Activated naive CD4-positive, alpha-beta T cell treated with anti-CD3 and anti-CD28 coated beads for 36 hours (primary cell): ENCODE measurements at regions of chr14 and their contacts with region 1.

Region 1: GRCh38 chr14:97866663-97867062 is 1069.5 kb downstream of the VRK1 start:
- DNase-seq: peak; percentile 25
- H3K4me3 Mint-ChIP-seq: no peak overlapping the region
- H3K27ac Mint-ChIP-seq: peak overlapping the region; percentile 61
- H3K4me1 Mint-ChIP-seq: peaks cover 15% of the 10 kb centered on the region
- H3K27me3 Mint-ChIP-seq: no peaks in the 10 kb centered on the region

Region 2: DNA sequence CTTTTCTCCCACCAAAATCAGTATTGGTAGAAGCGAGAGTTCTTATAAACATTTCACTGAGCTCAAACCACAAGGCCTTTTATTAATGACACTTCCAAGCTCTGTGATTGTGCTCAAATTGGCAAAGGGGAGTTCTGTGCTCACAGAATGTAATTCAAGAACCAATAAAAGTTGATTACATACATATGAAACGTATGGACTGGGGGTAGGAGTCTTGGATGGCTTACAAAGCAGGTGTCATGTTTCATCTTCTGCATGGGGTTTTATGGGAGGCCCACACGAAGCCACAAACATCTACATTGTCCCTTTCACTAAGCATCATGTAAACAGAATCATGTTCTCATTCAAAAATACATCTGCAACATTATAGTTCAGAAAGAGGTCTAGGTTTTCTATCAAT is 241.2 kb before region 1 on chr14:
- CTCF ChIA-PET with region 1: no interaction called
- intact Hi-C with region 1: loop called (anchors 10 kb)
- DNase-seq: no peak
- H3K4me3 Mint-ChIP-seq: no peak overlapping the region
- H3K27ac Mint-ChIP-seq: no peak overlapping the region
- H3K4me1 Mint-ChIP-seq: peaks cover 14% of the 10 kb centered on the region
- H3K27me3 Mint-ChIP-seq: no peaks in the 10 kb centered on the region

Region 3: DNA sequence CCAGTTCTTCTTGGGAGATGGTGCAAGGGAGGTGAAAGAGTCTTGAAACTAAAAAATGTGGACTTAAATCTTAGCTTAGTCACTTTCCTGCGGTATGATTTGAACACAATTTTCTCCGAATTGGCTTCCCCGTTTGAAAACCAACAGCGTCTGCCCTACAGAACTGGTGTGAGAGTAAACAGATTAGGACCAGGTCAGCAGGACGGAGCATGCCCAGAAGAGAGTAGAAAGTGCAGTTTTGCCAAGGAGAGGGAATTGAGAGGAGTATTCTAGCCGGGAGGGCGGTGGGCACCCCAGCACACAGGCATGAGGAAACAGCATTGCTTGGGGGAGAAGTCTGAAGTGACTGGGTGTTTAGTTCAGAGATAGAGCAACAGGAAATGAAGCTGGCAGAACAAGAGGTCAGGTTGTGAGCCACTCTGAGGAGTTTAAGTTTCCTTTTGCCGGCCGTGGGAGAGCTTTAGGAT is 142.4 kb before region 1 on chr14:
- CTCF ChIA-PET with region 1: no interaction called
- intact Hi-C with region 1: loop called (anchors 5 kb)
- DNase-seq: peak; percentile 64
- H3K4me3 Mint-ChIP-seq: peak overlapping the region; percentile 76
- H3K27ac Mint-ChIP-seq: peak overlapping the region; percentile 96
- H3K4me1 Mint-ChIP-seq: peaks cover 69% of the 10 kb centered on the region
- H3K27me3 Mint-ChIP-seq: no peaks in the 10 kb centered on the region